Transverse colon (tissue), 4 donors: ENCODE measurements at regions of chr19 and their contacts with region 1.

Region 1: GRCh38 chr19:10717356-10718204 is at the start of gene DNM2:
- DNase-seq: peak; percentile 99
- H3K4me3 ChIP-seq: peak within 1 kb of the TSS; percentile 81 to 100 (median 98)
- H3K27ac ChIP-seq: peak within 1 kb of the TSS; percentile 96 to 99 (median 98)
- H3K4me1 ChIP-seq: peaks cover 20 to 47% (median 38%) of the 10 kb centered on the region in 4 donors
- H3K27me3 ChIP-seq: no peaks in the 10 kb centered on the region
- CTCF ChIP-seq: peak; percentile 72 to 96 (median 79)
- EP300 ChIP-seq: no peak
- POLR2A ChIP-seq: peak; percentile 77
- total RNA-seq, gene DNM2: 469 to 1,152 (median 585) TPM

Region 2: DNA sequence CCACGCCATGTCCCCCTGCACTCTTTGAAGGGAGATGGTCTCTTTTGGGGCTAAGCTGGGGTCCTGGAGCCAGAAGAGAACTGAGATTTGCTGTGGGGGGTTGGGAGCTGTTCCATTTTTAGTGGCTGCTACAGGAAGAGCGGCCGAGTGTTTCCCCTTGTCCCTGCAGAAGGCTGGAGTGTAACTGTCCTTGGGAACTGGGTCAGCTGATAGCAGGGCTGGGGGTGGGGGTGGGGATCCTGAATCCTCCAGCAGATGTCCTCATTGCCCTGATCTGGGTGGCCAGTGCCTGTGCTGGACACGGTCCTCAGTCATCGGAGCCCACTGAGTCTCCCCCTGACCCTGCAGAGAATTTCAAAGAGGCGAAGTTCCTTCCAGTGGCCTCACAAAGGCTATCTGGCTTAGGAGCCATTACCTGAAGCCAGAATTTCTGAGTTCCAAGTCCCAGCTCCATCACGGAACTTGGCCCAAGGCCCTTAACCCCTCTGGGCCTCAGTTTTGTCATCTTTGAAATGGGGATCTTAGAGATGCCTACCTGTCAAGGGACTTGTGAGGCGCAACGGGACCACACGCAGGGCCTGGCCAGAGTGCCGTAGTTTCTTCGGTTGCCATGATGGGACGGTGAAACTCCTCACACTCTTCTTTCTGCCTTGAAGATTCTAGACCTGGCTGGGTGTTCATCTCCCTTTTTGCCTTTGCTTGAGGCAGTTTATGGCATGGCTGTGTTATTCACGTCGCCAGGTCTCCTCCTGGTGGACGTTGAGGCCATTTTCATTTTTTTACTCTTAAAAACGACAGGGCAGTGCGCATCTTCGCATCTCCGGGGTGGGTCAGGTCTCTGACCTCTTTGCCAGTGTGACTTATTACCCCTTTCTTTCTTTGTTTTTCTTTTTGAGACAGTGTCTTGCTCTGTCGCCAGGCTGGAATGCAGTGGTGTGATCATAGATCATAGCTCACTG is 52.2 kb after region 1 on chr19:
- in situ Hi-C with region 1: loop called in 1 of 4 experiments (anchors 10 kb)
- intact Hi-C with region 1: no loop called
- DNase-seq: peak; percentile 31
- H3K4me3 ChIP-seq: no peak overlapping the region
- H3K27ac ChIP-seq: peak overlapping the region; percentile 50 to 83 (median 72)
- H3K4me1 ChIP-seq: peaks cover 31 to 61% (median 49%) of the 10 kb centered on the region in 4 donors
- H3K27me3 ChIP-seq: no peaks in the 10 kb centered on the region
- CTCF ChIP-seq: peak; percentile 17 to 65 (median 30)
- EP300 ChIP-seq: no peak
- POLR2A ChIP-seq: no peak

Region 3: DNA sequence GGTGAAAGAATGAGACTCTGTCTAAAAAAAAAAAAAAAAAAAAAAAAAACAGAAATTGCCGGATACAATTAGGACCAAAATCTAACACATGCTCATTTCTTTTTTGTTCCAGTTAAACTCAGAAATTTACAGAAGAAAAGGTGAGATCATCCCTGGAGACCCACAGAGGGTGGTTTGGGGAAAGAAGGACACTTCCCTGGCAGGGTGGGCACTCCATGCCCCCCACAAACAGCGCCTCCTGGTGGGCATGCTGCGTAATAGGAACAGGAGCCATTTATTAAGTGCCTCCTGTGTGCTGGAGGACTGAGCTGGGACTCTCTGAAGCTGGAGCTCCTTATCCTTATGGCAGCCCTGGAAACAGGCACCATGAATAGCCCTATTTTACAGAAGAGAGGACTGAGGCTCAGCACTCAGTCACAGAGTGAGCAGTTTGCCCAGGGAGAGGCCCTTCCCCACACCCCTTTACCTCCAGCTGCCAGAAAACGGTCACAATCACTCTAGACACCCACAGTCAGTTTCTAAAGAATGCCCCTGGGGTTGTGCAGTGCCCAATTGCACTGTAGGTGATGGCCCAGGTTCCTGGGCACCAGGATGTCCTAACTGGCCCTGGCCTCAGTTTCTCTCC is 140.7 kb after region 1 on chr19:
- in situ Hi-C with region 1: loop called in 3 of 4 experiments (anchors 10 to 25 kb)
- intact Hi-C with region 1: no loop called
- DNase-seq: no peak
- H3K4me3 ChIP-seq: no peak overlapping the region
- H3K27ac ChIP-seq: no peak overlapping the region
- H3K4me1 ChIP-seq: no peaks in the 10 kb centered on the region
- H3K27me3 ChIP-seq: no peaks in the 10 kb centered on the region
- CTCF ChIP-seq: peak; percentile 39 to 47 (median 44)
- EP300 ChIP-seq: no peak
- POLR2A ChIP-seq: no peak

Region 4: GRCh38 chr19:10870955-10871603 is 153.5 kb after region 1 on chr19 and contains the start of gene CARM1:
- in situ Hi-C with region 1: loop called in 3 of 4 experiments (anchors 5 to 25 kb)
- intact Hi-C with region 1: no loop called
- DNase-seq: peak; percentile 100
- H3K4me3 ChIP-seq: peak within 1 kb of the TSS; percentile 75 to 96 (median 89)
- H3K27ac ChIP-seq: peak within 1 kb of the TSS; percentile 90 to 97 (median 92)
- H3K4me1 ChIP-seq: peaks cover 13 to 35% (median 25%) of the 10 kb centered on the region in 4 donors
- H3K27me3 ChIP-seq: no peaks in the 10 kb centered on the region
- CTCF ChIP-seq: peak in 4 of 5 experiments; percentile 43 to 65 (median 55)
- EP300 ChIP-seq: no peak
- POLR2A ChIP-seq: no peak
- total RNA-seq, gene CARM1: 24.9 to 47.6 (median 35.6) TPM